Right lobe of liver (tissue), 6 donors: ENCODE measurements at regions of chr13 and their contacts with region 1.

Region 1: DNA sequence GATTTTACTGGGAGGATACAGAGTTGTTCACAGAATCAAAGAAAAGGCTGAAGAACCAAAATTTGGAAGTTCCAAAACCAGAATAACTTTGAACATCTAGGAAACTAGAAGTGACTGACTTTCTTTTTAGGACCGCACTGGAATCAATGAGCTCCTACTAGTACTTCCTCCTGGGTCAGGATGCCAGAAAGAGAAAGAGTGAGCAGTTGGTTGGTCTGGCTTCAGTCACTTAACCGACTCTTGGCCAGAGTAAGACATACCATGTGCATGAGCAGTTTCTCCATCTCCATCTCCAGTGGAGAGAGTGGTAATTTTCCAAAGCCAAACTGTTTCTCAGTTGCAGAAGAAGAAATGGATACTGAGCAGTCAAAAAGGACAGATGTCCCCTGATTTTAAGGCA is 27.1 kb upstream of the MTUS2 start:
- DNase-seq: no peak
- ATAC-seq: no peak
- H3K4me3 ChIP-seq: no peak overlapping the region
- H3K27ac ChIP-seq: no peak overlapping the region
- H3K4me1 ChIP-seq: peaks cover 0 to 18% (median 3%) of the 10 kb centered on the region in 4 donors
- H3K27me3 ChIP-seq: no peaks in the 10 kb centered on the region
- CTCF ChIP-seq: no peak
- POLR2A ChIP-seq: no peak

Region 2: DNA sequence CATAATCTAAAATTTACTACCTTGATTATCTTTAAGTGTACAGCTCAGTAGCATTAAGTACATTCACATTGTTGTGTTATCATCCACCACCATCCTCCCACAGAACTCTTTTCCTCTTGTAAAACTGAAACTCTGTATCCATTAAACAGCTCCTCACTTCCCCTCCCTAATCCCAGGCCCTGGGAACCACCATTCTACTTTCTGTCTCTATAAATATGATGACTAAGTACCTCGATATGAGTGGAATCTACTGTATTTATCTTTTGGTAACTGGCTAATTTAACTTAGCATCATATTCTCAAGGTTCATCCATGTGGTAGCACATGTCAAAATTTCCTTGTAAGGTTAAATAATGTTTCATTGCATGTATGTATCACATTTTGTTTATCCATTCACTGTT is 183.1 kb before region 1 on chr13:
- intact Hi-C with region 1: no loop called
- DNase-seq: no peak
- ATAC-seq: no peak
- H3K4me3 ChIP-seq: no peak overlapping the region
- H3K27ac ChIP-seq: no peak overlapping the region
- H3K4me1 ChIP-seq: no peaks in the 10 kb centered on the region
- H3K27me3 ChIP-seq: no peaks in the 10 kb centered on the region
- CTCF ChIP-seq: no peak
- POLR2A ChIP-seq: no peak

Region 3: DNA sequence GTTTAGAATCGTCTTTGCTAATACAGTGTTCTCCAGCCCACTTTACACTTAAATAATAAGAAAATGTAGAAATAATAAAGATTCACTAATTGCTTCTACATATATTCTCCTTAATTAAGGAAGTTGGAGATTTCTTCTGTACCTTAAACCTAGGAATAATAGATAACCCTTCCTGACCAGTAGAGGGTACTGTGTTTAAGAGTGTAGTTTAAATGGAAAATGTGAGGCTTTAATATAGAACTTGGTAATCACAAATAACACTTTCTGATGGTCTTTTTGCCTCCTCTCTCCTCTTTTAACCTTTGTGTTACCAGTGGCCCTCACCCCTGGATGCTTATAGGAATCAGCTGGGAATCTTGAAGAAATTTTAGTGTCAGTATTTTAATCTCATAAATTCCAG is 113.4 kb before region 1 on chr13:
- intact Hi-C with region 1: loop called (anchors 10 kb)
- DNase-seq: no peak
- ATAC-seq: peak; percentile 44 to 64 (median 50)
- H3K4me3 ChIP-seq: no peak overlapping the region
- H3K27ac ChIP-seq: no peak overlapping the region
- H3K4me1 ChIP-seq: no peaks in the 10 kb centered on the region
- H3K27me3 ChIP-seq: no peaks in the 10 kb centered on the region
- CTCF ChIP-seq: peak; percentile 34 to 50 (median 38)
- POLR2A ChIP-seq: no peak

Region 4: DNA sequence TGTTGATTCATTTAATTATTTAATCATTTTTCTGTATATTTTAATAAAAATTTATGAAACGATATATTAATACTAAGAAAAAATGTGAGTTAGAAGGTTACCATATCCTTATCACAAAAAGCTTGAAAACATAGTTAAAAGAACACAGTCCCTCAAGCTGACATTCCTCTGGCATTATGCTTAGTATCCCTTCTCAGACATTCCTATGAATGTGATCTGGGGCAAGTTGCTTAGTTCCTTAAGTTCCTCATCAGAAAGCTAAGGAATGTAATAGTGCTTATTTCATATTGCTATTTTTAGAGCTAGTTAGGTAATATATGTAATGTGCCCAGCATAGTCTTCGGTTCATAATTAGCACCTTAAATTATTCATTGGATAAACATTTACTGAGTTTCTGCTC is 149.9 kb after region 1 on chr13:
- intact Hi-C with region 1: no loop called
- DNase-seq: no peak
- ATAC-seq: no peak
- H3K4me3 ChIP-seq: no peak overlapping the region
- H3K27ac ChIP-seq: no peak overlapping the region
- H3K4me1 ChIP-seq: no peaks in the 10 kb centered on the region
- H3K27me3 ChIP-seq: no peaks in the 10 kb centered on the region
- CTCF ChIP-seq: no peak
- POLR2A ChIP-seq: no peak